SK-N-SH (cell line): ENCODE measurements at regions of chr5 and their contacts with region 1.

Region 1: GRCh38 chr5:14685757-14686156 is 21.2 kb downstream of the OTULIN start:
- DNase-seq: peak; percentile 69
- H3K4me3 ChIP-seq: no peak overlapping the region
- H3K27ac ChIP-seq: no peak overlapping the region; a peak in 1 of 4 replicates
- H3K4me1 ChIP-seq: peaks cover 0 to 11% of the 10 kb centered on the region in 2 experiments; a peak in 2 of 4 replicates
- H3K27me3 ChIP-seq: no peaks in the 10 kb centered on the region
- CTCF ChIP-seq: peak; percentile 73
- EP300 ChIP-seq: no peak
- RAD21 ChIP-seq: peak; percentile 85

Region 2: GRCh38 chr5:14706615-14707021 is 20.9 kb after region 1 on chr5:
- CTCF ChIA-PET with region 1: interaction called, 10 read pairs
- POLR2A ChIA-PET with region 1: no interaction called
- DNase-seq: peak; percentile 45
- H3K4me3 ChIP-seq: no peak overlapping the region
- H3K27ac ChIP-seq: peak overlapping the region; percentile 58 to 78
- H3K4me1 ChIP-seq: peaks cover 9 to 22% of the 10 kb centered on the region in 2 experiments; a peak in 3 of 4 replicates
- H3K27me3 ChIP-seq: no peaks in the 10 kb centered on the region
- CTCF ChIP-seq: no peak
- EP300 ChIP-seq: no peak
- RAD21 ChIP-seq: no peak

Region 3: GRCh38 chr5:14720236-14720971 is 34.6 kb after region 1 on chr5:
- CTCF ChIA-PET with region 1: interaction called, 14 read pairs
- POLR2A ChIA-PET with region 1: no interaction called
- DNase-seq: no peak
- H3K4me3 ChIP-seq: no peak overlapping the region
- H3K27ac ChIP-seq: peak overlapping the region in 1 of 2 experiments; percentile 26; a peak in 2 of 4 replicates
- H3K4me1 ChIP-seq: peaks cover 0 to 6% of the 10 kb centered on the region in 2 experiments; a peak in 1 of 4 replicates
- H3K27me3 ChIP-seq: no peaks in the 10 kb centered on the region
- CTCF ChIP-seq: no peak
- EP300 ChIP-seq: no peak
- RAD21 ChIP-seq: no peak

Region 4: DNA sequence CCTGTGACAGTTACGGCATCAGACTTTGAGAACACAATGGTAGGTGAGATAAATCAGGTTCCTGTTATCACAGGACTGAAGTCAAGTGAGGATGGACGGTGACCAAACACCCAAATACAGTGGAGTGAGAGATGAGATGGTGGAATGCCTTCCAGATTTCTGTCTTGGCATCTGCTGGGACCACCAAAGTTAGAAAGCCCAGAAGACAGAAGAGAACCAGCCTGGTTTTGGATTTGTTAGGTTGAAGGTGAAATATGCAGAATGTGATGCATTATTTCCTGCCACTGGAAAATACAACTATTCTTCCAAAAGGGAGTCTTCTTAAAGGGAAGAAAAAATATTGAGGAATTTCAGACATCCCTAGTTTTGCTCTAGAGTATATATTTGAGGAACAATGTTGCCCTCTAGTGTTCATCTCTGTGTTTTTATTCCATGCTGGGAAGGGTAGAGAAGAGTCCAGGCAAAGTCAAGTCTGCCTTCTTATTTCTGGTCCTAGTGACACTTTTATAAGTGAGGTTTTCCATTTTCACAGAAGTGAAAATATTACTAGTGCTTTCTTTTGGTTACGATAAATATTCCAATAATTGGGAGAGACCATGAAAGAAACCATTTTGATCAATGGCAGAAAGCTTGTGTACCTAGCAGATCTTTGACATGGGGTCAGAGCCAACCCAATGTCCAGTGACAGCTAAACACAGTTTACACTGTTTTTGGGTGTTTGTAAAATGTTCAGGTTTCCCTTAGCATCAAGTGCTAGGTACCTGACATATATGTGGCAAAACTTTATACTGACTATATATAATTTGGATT is 328.1 kb after region 1 on chr5:
- CTCF ChIA-PET with region 1: interaction called, 11 read pairs
- POLR2A ChIA-PET with region 1: no interaction called
- DNase-seq: peak; percentile 62
- H3K4me3 ChIP-seq: no peak overlapping the region
- H3K27ac ChIP-seq: peak overlapping the region in 1 of 2 experiments; percentile 11; a peak in 1 of 4 replicates
- H3K4me1 ChIP-seq: peaks cover 1 to 13% of the 10 kb centered on the region in 2 experiments
- H3K27me3 ChIP-seq: no peaks in the 10 kb centered on the region
- CTCF ChIP-seq: peak; percentile 76
- EP300 ChIP-seq: no peak
- RAD21 ChIP-seq: peak; percentile 83